Left lung (tissue), 14 donors: ENCODE measurements at regions of chr7 and their contacts with region 1.

Region 1: DNA sequence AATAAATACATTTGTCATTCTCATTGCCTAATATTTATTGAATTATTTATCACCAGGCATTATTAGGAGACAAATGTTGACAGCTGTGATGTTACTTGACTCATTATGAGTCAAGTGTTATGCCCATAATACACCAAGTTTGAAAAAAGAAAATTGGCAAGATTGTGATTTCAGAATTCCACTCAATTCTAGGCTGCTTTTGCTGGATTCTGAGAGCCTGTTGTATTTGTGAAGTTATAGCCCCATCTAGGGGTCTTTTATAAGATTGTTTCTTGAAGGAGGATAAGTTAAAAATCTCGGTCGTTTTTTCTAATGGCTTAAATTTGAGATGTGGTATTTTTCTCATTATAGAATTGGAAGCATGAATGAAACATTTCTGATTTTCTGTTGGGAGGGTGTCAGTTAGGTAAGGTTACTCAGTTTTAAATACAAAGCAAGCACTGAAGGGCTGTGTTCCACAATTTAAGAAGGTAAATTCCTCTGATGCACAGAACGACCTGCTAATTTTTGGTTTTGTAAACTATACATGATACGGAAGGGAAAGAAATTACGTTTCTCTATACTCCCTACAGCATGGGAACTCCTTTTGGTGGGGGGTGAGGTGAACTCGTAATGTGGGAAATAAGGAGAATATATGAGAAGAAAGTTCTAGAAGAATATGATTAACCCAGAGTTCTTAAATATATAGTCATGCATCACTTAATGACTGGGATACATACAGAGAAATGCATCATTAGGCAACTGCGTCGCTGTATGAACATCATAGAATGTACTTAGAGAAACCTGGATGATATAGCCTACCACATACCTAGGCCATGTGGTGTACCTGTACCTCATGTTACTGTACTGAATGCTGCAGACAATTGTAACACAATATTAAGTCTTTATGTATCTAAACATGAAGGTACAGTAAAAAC is 2.6 kb downstream of the STK31 start:
- DNase-seq: peak in 2 of 4 donors; percentile 49 to 70
- ATAC-seq: peak; percentile 82
- H3K4me3 ChIP-seq: no peak overlapping the region
- H3K27ac ChIP-seq: no peak overlapping the region
- H3K4me1 ChIP-seq: no peaks in the 10 kb centered on the region
- H3K27me3 ChIP-seq: no peaks in the 10 kb centered on the region
- CTCF ChIP-seq: peak; percentile 58 to 64

Region 2: GRCh38 chr7:23546897-23547572 is 165.6 kb before region 1 on chr7:
- intact Hi-C with region 1: loop called in 1 of 2 experiments (anchors 10 kb)
- DNase-seq: peak; percentile 26 to 93 (median 66)
- ATAC-seq: peak; percentile 98
- H3K4me3 ChIP-seq: no peak overlapping the region
- H3K27ac ChIP-seq: no peak overlapping the region
- H3K4me1 ChIP-seq: peaks cover 0 to 4% of the 10 kb centered on the region in 2 donors
- H3K27me3 ChIP-seq: no peaks in the 10 kb centered on the region
- CTCF ChIP-seq: peak; percentile 91 to 93

Region 3: DNA sequence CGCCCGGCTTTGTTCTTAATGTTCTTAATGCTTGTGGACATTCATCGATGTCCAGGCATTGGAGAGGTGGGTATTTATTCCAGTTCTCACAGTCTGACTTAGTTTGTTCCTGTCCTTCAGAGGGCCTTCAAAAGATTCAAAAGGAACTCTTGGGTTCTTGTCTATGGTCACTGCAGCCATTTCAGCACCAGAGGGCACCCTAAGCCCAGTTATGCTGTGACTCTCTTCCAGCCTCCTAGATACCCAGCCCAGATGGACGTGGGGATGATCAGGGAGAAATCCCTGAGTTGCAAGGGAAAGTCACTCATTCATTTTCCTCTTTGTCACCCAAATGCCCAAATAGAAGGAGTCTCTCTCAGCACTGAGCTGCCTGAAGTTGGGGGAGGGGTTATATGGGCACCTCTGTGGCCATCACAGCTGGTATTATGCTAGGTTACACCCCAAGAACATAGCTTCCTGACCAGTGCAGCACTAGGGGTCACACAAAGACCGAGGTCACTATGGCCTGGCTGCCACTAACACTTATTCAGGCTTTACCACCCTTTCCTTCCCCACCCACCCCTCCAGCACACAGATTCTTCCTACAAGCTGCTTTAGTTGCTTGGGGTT is 141.9 kb before region 1 on chr7:
- intact Hi-C with region 1: loop called in 1 of 2 experiments (anchors 5 kb)
- DNase-seq: peak in 3 of 4 donors; percentile 53 to 84 (median 54)
- ATAC-seq: peak; percentile 100
- H3K4me3 ChIP-seq: no peak overlapping the region
- H3K27ac ChIP-seq: no peak overlapping the region
- H3K4me1 ChIP-seq: no peaks in the 10 kb centered on the region
- H3K27me3 ChIP-seq: peaks cover 0 to 16% of the 10 kb centered on the region in 2 donors
- CTCF ChIP-seq: peak; percentile 65 to 73

Region 4: DNA sequence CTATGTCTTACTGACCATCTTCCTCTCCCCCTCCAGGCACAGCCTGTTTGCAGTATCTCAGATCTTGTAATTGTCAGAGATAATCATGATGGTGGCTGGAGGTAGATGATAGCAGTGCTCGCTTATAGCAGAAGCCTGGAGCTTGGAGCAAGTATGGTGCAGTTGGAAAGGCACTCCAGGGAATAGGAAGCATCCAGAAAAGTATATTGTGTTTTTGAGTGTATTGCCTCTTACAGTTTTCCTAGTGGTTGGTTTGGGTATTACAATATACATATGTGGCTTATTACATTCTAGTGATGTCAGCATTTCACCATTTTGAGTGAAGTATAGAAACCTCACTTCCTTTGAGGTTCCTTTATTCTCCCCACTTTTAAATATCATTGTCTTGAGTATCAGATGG is 98.9 kb after region 1 on chr7:
- intact Hi-C with region 1: no loop called
- DNase-seq: no peak
- ATAC-seq: no peak
- H3K4me3 ChIP-seq: no peak overlapping the region
- H3K27ac ChIP-seq: no peak overlapping the region
- H3K4me1 ChIP-seq: no peaks in the 10 kb centered on the region
- H3K27me3 ChIP-seq: no peaks in the 10 kb centered on the region
- CTCF ChIP-seq: peak in 1 of 2 donors; percentile 10